ENCODE measurements at regions of chr4 and their contacts with region 1.

Region 1: DNA sequence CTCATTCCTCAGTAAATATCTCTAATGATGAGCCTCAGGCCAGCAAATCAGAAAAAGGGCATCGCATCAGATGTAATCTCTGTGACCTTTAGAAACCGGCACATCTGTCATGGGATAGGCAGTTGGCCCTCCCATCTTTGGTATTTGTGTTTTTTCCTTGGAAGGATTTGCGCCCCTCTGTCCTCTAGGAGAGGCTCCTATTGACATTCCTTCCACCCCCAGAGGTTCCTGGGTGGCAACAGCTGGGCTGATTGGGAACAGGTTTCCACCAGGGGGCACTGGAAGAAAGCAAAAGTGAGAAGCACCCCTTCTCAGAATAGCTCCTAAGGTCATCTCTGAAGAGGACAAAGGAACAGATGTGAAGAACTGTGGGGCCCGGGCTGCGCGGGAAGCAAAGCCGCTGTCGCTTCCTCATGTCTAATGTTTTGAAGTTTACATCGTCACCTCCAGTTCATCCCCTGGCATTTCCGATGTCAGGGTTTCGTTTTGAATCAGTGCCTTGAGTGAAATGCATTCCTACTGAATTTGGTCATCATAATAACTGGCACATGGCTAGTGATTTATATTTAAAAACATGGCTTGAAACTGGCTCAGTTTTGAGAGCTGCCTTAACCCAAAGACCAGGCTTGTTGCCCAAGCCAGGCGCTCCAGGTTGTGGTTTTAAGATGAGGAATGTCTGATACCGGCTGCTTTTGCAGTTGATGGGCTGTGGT is 6.2 kb downstream of the TXK start:
- DNase-seq: peak; percentile 73 to 84
- H3K4me3 ChIP-seq: peak overlapping the region in 2 of 4 experiments; percentile 21 to 42; a peak in 3 of 8 replicates
- H3K27ac ChIP-seq: peak overlapping the region; percentile 33; the same call in 1 of the 2 replicates
- H3K4me1 ChIP-seq: peaks cover 0 to 14% (median 7%) of the 10 kb centered on the region in 4 experiments; a peak in 5 of 7 replicates
- H3K27me3 ChIP-seq: no peaks in the 10 kb centered on the region
- CTCF ChIP-seq: peak; percentile 57 to 87 (median 80)
- EP300 ChIP-seq: no peak
- POLR2A ChIP-seq: no peak
- RAD21 ChIP-seq: peak; percentile 87

Region 2: DNA sequence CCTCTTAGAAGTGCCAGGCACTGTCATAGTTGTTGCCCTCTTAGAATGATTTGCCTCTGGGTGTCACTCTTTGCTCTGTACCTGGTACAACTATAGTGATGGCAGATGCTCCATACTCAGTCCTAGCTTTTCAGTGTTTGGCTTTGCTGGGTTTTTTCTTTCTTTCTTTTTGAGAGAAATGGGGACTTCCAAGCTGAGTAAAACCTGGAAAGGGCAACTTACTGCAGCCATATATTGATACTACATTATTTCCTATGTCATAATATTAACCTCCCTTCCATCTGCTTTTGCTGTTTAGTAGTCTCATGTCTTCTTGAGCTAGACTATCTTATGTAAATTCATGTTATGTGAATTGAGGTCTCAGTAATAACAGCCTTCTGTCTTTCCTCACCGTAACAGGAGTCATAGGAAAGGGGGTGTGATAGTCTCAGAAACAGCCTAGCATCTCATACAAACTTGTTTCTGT is 62.2 kb before region 1 on chr4:
- CTCF ChIA-PET with region 1: no interaction called
- POLR2A ChIA-PET with region 1: no interaction called
- DNase-seq: no peak
- H3K4me3 ChIP-seq: no peak overlapping the region
- H3K27ac ChIP-seq: no peak overlapping the region
- H3K4me1 ChIP-seq: no peaks in the 10 kb centered on the region
- H3K27me3 ChIP-seq: no peaks in the 10 kb centered on the region
- CTCF ChIP-seq: no peak
- EP300 ChIP-seq: no peak
- POLR2A ChIP-seq: no peak
- RAD21 ChIP-seq: no peak

Region 3: DNA sequence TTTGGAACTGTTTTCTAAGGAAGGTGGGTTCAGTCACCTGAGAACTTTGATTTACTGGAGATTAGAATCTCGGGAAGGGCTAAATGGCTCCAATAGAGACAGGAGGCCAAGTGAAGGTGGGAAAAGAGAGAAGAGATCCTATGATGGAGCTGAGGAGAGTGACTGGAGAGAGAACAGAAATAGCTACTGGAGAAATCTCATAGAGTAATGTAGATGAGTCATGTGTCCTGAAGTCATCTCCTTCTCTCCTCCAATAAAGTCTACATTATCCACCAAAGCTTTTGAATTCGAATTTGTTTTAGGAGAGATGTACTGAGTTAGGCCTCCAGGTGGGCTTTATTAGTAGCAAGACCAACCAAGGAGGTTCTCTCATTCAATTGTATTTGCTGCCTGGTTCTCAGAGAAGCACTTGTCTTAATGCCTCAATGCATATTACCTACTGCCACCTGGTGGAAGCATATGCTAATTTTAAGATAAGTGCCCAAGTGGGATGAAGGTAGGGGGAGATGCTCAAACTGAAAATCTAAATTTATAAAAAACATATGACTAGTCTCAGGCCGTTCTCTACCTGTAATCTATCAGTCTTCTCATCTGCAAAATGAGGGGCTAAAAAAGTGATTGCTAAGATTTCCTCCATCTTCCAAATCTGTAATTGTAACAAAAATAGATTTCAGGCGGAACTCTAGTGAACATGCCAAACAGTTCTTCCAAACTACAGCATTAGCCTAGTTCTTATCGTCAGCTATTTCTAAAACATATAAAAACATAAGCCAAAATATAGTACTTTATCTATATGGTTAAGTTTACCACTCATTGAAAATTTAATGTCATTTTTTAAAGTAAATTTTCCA is 18.2 kb before region 1 on chr4:
- CTCF ChIA-PET with region 1: interaction called, 15 read pairs
- POLR2A ChIA-PET with region 1: no interaction called
- DNase-seq: no peak
- H3K4me3 ChIP-seq: no peak overlapping the region
- H3K27ac ChIP-seq: no peak overlapping the region
- H3K4me1 ChIP-seq: peaks cover 0 to 3% (median 0%) of the 10 kb centered on the region in 4 experiments; a peak in 2 of 7 replicates
- H3K27me3 ChIP-seq: no peaks in the 10 kb centered on the region
- CTCF ChIP-seq: peak in 2 of 3 experiments; percentile 55 to 68; a peak in 3 of 4 replicates
- EP300 ChIP-seq: no peak
- POLR2A ChIP-seq: no peak
- RAD21 ChIP-seq: peak; percentile 58 to 67

Region 4: DNA sequence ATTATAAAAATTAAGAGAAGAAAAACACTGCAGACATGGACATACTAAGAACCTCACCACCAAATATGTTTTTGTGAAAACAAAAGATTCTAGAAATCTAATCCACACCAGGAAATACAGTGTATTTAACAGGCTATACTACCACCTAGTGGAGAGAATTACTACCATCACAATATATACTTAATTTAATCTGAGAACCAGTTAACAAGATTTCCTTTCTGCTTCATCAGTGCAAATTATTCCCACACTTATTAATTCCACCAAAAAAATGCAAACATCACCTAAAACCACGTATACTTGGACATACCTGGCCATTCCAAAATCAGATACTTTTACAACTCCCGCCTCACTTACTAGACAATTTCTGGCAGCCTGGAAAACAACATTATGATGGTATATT is 13.2 kb after region 1 on chr4:
- CTCF ChIA-PET with region 1: interaction called, 64 read pairs
- POLR2A ChIA-PET with region 1: interaction called, 3 read pairs
- DNase-seq: no peak
- H3K4me3 ChIP-seq: no peak overlapping the region
- H3K27ac ChIP-seq: no peak overlapping the region
- H3K4me1 ChIP-seq: no peaks in the 10 kb centered on the region
- H3K27me3 ChIP-seq: no peaks in the 10 kb centered on the region
- CTCF ChIP-seq: peak in 2 of 3 experiments; percentile 17 to 36; a peak in 2 of 4 replicates
- EP300 ChIP-seq: no peak
- POLR2A ChIP-seq: no peak
- RAD21 ChIP-seq: peak in 1 of 2 experiments; percentile 58; a peak in 3 of 4 replicates

Region 5: DNA sequence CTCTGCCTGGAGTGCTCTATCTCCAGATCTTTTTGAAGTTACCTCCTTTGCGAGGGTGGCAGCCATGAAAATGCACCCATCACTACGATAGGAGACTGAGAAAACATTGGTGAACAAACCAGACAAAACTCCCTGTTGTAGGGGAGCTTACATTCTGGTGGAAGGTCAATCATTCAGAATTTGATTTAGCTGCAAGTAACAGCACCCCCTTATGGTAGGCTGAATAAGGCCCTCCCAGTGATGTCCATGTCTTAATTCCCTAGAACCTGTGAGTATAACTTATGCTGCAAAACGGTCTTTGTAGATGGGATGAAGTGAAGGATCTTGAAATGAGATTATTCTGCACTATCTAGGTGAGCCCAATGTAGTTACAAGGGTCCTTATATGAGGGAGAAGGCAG is 147.4 kb after region 1 on chr4:
- CTCF ChIA-PET with region 1: interaction called, 20 read pairs
- POLR2A ChIA-PET with region 1: no interaction called
- DNase-seq: no peak
- H3K4me3 ChIP-seq: no peak overlapping the region
- H3K27ac ChIP-seq: no peak overlapping the region
- H3K4me1 ChIP-seq: peaks cover 0 to 2% (median 0%) of the 10 kb centered on the region in 4 experiments; a peak in 3 of 7 replicates
- H3K27me3 ChIP-seq: no peaks in the 10 kb centered on the region
- CTCF ChIP-seq: peak in 2 of 3 experiments; percentile 50 to 79; a peak in 2 of 4 replicates
- EP300 ChIP-seq: no peak
- POLR2A ChIP-seq: no peak
- RAD21 ChIP-seq: peak; percentile 56 to 68

Region 6: GRCh38 chr4:48546336-48546735 is 418.5 kb after region 1 on chr4:
- CTCF ChIA-PET with region 1: interaction called, 11 read pairs
- POLR2A ChIA-PET with region 1: no interaction called
- DNase-seq: no peak
- H3K4me3 ChIP-seq: no peak overlapping the region
- H3K27ac ChIP-seq: no peak overlapping the region
- H3K4me1 ChIP-seq: no peaks in the 10 kb centered on the region; a peak in 1 of 7 replicates
- H3K27me3 ChIP-seq: peaks cover 0 to 1% (median 0%) of the 10 kb centered on the region in 4 experiments; a peak in 1 of 7 replicates
- CTCF ChIP-seq: peak in 2 of 3 experiments; percentile 59 to 72; a peak in 3 of 4 replicates
- EP300 ChIP-seq: no peak
- POLR2A ChIP-seq: no peak
- RAD21 ChIP-seq: peak; percentile 81 to 84